ENCODE measurements at regions of chr5 and their contacts with region 1.

Region 1: GRCh38 chr5:55146543-55147151 is 13.3 kb upstream of the GPX8 start:
- DNase-seq: peak; percentile 64 to 77 (median 69)
- ATAC-seq: peak; percentile 37 to 89 (median 74)
- H3K4me3 ChIP-seq: no peak overlapping the region
- H3K27ac ChIP-seq: no peak overlapping the region
- H3K4me1 ChIP-seq: peaks cover 0 to 5% (median 0%) of the 10 kb centered on the region in 12 donors
- H3K27me3 ChIP-seq: peaks cover 0 to 19% (median 3%) of the 10 kb centered on the region in 9 donors
- CTCF ChIP-seq: peak; percentile 84 to 97 (median 92)
- POLR2A ChIP-seq: no peak

Region 2: DNA sequence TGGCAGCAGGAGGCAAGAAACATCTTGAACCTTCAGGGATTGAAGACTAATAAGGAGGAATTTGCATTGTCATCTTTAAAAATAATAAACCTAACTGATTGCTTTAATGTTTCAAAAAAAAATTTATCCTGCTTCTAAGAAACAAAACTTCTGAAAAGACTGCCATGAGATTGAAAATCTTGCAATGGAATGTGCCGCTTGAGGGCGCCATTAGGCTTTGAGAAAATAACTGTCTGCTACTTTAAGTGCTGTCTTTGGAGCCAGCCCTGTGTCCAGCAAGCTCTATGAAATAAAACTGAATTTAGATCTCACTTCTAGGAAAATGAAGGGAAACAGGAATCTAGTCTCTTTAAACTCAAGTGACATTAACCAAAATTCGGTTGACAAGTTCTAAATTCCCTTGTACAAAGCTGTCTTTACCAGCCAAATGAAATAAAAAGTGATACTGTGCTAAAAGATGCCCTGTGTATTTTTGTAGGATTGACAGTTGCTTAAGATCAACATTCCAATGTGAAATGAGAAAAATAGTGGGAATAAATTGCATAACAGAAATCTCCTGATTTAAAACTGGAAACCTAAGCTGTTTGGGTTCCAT is 240.6 kb before region 1 on chr5:
- intact Hi-C with region 1: loop called (anchors 1 to 5 kb)
- DNase-seq: peak in 4 of 5 donors; percentile 38 to 56 (median 47)
- ATAC-seq: no peak
- H3K4me3 ChIP-seq: no peak overlapping the region
- H3K27ac ChIP-seq: no peak overlapping the region
- H3K4me1 ChIP-seq: peaks cover 0 to 3% (median 0%) of the 10 kb centered on the region in 12 donors
- H3K27me3 ChIP-seq: peaks cover 0 to 8% (median 0%) of the 10 kb centered on the region in 9 donors
- CTCF ChIP-seq: peak; percentile 30 to 82 (median 70)
- POLR2A ChIP-seq: no peak

Region 3: DNA sequence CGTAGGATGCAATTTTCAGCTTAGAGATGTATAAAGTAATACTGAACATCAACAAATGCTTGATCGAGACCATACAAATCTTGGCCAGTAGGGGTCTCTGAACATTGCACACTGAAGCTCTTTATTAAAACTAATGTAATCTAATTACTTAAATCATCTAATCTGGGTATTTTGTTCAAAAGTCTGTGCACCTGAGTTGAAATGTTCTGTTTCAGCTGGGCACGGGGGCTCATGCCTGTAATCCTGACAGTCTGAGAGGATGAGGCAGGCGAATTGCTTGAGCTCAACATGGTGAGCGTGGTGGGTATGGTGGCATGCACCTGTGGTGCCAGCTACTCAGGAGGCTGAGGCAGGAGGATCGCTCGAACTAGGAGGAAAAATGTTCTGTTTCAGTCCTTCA is 202.3 kb before region 1 on chr5:
- intact Hi-C with region 1: loop called (anchors 1 to 10 kb)
- DNase-seq: peak in 1 of 5 donors; percentile 16
- ATAC-seq: no peak
- H3K4me3 ChIP-seq: no peak overlapping the region
- H3K27ac ChIP-seq: no peak overlapping the region
- H3K4me1 ChIP-seq: no peaks in the 10 kb centered on the region
- H3K27me3 ChIP-seq: peaks cover 0 to 3% (median 0%) of the 10 kb centered on the region in 9 donors
- CTCF ChIP-seq: peak; percentile 46 to 78 (median 65)
- POLR2A ChIP-seq: no peak

Measured in heart left ventricle (tissue), 16 donors.